CD8-positive, alpha-beta memory T cell (primary cell): ENCODE measurements at regions of chr15 and their contacts with region 1.

Region 1: GRCh38 chr15:75872403-75872990 is 29.2 kb downstream of the UBE2Q2 start:
- DNase-seq: no peak
- H3K4me3 ChIP-seq: no peak overlapping the region
- H3K4me3 Mint-ChIP-seq: no peak overlapping the region
- H3K27ac ChIP-seq: no peak overlapping the region
- H3K27ac Mint-ChIP-seq: no peak overlapping the region
- H3K4me1 ChIP-seq: no peaks in the 10 kb centered on the region
- H3K4me1 Mint-ChIP-seq: peaks cover 7 to 18% (median 7%) of the 10 kb centered on the region in 3 donors
- H3K27me3 ChIP-seq: no peaks in the 10 kb centered on the region
- H3K27me3 Mint-ChIP-seq: no peaks in the 10 kb centered on the region

Region 2: GRCh38 chr15:75836953-75837321 is 35.6 kb before region 1 on chr15:
- CTCF ChIA-PET with region 1: no interaction called
- POLR2A ChIA-PET with region 1: interaction called, 14 read pairs
- DNase-seq: peak in 3 of 5 donors; percentile 18 to 69 (median 41)
- H3K4me3 ChIP-seq: no peak overlapping the region
- H3K4me3 Mint-ChIP-seq: no peak overlapping the region
- H3K27ac ChIP-seq: no peak overlapping the region
- H3K27ac Mint-ChIP-seq: no peak overlapping the region
- H3K4me1 ChIP-seq: peaks cover 5% of the 10 kb centered on the region
- H3K4me1 Mint-ChIP-seq: peaks cover 0 to 5% (median 5%) of the 10 kb centered on the region in 3 donors
- H3K27me3 ChIP-seq: no peaks in the 10 kb centered on the region
- H3K27me3 Mint-ChIP-seq: peaks cover 0 to 1% of the 10 kb centered on the region in 2 donors